Right cardiac atrium (tissue), 5 donors: ENCODE measurements at regions of chr1 and their contacts with region 1.

Region 1: GRCh38 chr1:67760030-67760821 is 73.0 kb downstream of the GNG12 start:
- DNase-seq: peak; percentile 40 to 82 (median 66)
- ATAC-seq: peak; percentile 77 to 79
- H3K4me3 ChIP-seq: no peak overlapping the region
- H3K27ac ChIP-seq: no peak overlapping the region
- H3K4me1 ChIP-seq: no peaks in the 10 kb centered on the region
- H3K27me3 ChIP-seq: no peaks in the 10 kb centered on the region

Region 2: DNA sequence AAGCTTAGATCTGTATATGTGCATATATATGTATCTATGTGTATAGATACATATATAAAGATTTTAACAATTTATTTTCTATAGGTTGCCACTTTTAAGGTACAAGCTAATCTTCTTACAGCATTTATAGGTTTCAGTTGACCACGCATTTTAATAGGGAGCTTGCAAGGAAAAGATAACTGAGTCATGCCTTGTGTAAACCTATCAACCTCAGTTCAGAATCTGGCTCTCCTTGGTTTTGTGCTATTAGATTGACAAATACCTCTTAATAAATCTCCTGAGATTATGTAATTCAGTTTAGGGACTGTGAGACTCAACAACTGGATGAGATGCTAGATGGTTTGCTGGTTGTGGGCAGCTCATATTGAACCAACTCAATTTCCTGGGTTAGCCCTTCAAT is 215.3 kb before region 1 on chr1:
- intact Hi-C with region 1: no loop called
- DNase-seq: no peak
- ATAC-seq: no peak
- H3K4me3 ChIP-seq: no peak overlapping the region
- H3K27ac ChIP-seq: no peak overlapping the region
- H3K4me1 ChIP-seq: no peaks in the 10 kb centered on the region
- H3K27me3 ChIP-seq: no peaks in the 10 kb centered on the region

Region 3: GRCh38 chr1:67561704-67562113 is 198.5 kb before region 1 on chr1:
- intact Hi-C with region 1: loop called in 3 of 4 experiments (anchors 2 to 5 kb)
- DNase-seq: peak; percentile 90 to 96 (median 94)
- ATAC-seq: peak; percentile 68 to 78
- H3K4me3 ChIP-seq: no peak overlapping the region
- H3K27ac ChIP-seq: no peak overlapping the region
- H3K4me1 ChIP-seq: peaks cover 5% of the 10 kb centered on the region
- H3K27me3 ChIP-seq: no peaks in the 10 kb centered on the region

Region 4: GRCh38 chr1:67710417-67710816 is 49.8 kb before region 1 on chr1:
- intact Hi-C with region 1: loop called in 1 of 4 experiments (anchors 2 kb)
- DNase-seq: peak in 2 of 3 donors; percentile 46 to 75
- ATAC-seq: peak; percentile 74 to 78
- H3K4me3 ChIP-seq: no peak overlapping the region
- H3K27ac ChIP-seq: no peak overlapping the region
- H3K4me1 ChIP-seq: peaks cover 10% of the 10 kb centered on the region
- H3K27me3 ChIP-seq: no peaks in the 10 kb centered on the region